Heart right ventricle (tissue), 16 donors: ENCODE measurements at regions of chr2 and their contacts with region 1.

Region 1: DNA sequence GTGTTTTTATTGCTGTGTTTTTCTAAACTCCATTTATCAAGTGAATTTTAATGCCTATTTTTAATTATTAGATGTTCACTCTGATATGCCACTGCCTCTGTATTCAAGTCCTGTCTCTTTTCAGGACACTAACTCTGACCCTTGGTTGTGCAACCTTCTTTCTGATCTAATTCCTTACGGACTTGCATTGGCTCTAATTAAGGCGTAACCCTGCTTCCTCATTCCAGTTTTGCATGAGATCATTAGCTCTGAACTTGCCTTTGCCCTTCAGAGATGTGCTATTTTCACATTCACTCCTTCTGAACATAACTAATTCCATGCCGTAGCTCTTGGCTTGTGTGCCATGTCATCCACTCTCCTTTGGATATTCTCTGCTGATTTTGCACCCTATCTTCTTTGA is 162.5 kb upstream of the TMEFF2 start:
- DNase-seq: no peak
- ATAC-seq: no peak
- H3K4me3 ChIP-seq: no peak overlapping the region
- H3K27ac ChIP-seq: no peak overlapping the region
- H3K4me1 ChIP-seq: no peaks in the 10 kb centered on the region
- H3K27me3 ChIP-seq: no peaks in the 10 kb centered on the region
- CTCF ChIP-seq: no peak

Region 2: GRCh38 chr2:192345287-192345686 is 11.9 kb before region 1 on chr2:
- intact Hi-C with region 1: loop called in 1 of 10 experiments (anchors 1 kb)
- DNase-seq: no peak
- ATAC-seq: no peak
- H3K4me3 ChIP-seq: no peak overlapping the region
- H3K27ac ChIP-seq: no peak overlapping the region
- H3K4me1 ChIP-seq: no peaks in the 10 kb centered on the region
- H3K27me3 ChIP-seq: no peaks in the 10 kb centered on the region
- CTCF ChIP-seq: no peak

Region 3: DNA sequence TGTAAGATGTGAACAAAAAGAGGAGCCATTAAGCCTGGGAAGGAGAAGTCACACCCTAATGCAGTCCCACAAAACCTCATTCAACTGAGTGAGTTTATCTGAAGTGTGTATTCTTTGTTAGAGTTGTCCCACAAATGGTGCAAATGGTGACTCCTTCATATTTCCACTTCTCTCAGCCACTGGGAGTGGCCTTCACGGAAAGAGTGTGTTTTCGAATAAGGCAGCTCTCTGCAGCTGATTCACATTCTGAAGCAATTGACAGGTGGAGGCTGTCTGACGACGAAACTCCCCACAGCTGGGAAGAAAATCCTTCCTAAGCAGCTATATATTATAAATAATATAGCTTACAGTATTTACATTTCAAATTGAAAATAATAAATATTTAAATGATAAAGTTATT is 156.4 kb after region 1 on chr2:
- intact Hi-C with region 1: no loop called
- DNase-seq: no peak
- ATAC-seq: no peak
- H3K4me3 ChIP-seq: no peak overlapping the region
- H3K27ac ChIP-seq: no peak overlapping the region
- H3K4me1 ChIP-seq: no peaks in the 10 kb centered on the region
- H3K27me3 ChIP-seq: no peaks in the 10 kb centered on the region
- CTCF ChIP-seq: no peak